Endothelial cell of umbilical vein (primary cell): ENCODE measurements at regions of chr12 and their contacts with region 1.

Region 1: GRCh38 chr12:94149119-94149780 is 873 bp downstream of the PLXNC1 start:
- DNase-seq: no peak
- H3K4me3 ChIP-seq: peak overlapping the region in 1 of 3 experiments; percentile 11
- H3K27ac ChIP-seq: no peak overlapping the region
- H3K4me1 ChIP-seq: no peaks in the 10 kb centered on the region
- H3K27me3 ChIP-seq: peaks cover 62 to 82% of the 10 kb centered on the region in 2 experiments
- CTCF ChIP-seq: peak in 1 of 2 donors; percentile 10
- POLR2A ChIP-seq: no peak

Region 2: DNA sequence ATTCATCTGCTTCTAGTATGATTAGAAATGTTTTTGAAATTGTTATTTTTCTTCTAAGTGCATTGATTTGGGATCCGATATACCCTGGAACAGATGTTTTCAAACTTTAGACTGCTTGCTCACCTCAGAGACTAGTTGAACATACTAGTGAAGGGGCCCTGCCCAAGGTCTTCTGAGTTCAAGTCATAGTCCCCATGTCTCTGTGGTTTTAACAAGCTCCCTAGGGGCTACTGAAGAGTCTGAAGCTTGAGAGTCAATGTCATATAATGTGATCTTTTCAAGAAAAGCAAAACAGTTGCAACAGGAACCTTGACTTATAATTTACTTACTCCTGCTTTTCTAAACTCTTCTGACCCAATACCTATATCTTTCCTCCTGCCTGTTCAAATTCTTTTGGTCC is 700.0 kb before region 1 on chr12:
- CTCF ChIA-PET with region 1: no interaction called
- POLR2A ChIA-PET with region 1: no interaction called
- dilution Hi-C with region 1: no loop called
- intact Hi-C with region 1: no loop called
- DNase-seq: no peak
- H3K4me3 ChIP-seq: no peak overlapping the region
- H3K27ac ChIP-seq: no peak overlapping the region
- H3K4me1 ChIP-seq: no peaks in the 10 kb centered on the region
- H3K27me3 ChIP-seq: peaks cover 3 to 4% of the 10 kb centered on the region in 2 experiments
- CTCF ChIP-seq: no peak
- POLR2A ChIP-seq: no peak

Region 3: GRCh38 chr12:94112132-94112531 is 37.1 kb before region 1 on chr12:
- CTCF ChIA-PET with region 1: no interaction called
- POLR2A ChIA-PET with region 1: no interaction called
- dilution Hi-C with region 1: no loop called
- intact Hi-C with region 1: no loop called
- DNase-seq: no peak
- H3K4me3 ChIP-seq: no peak overlapping the region
- H3K27ac ChIP-seq: no peak overlapping the region
- H3K4me1 ChIP-seq: no peaks in the 10 kb centered on the region
- H3K27me3 ChIP-seq: peaks cover 13 to 23% of the 10 kb centered on the region in 2 experiments
- CTCF ChIP-seq: no peak
- POLR2A ChIP-seq: no peak

Region 4: DNA sequence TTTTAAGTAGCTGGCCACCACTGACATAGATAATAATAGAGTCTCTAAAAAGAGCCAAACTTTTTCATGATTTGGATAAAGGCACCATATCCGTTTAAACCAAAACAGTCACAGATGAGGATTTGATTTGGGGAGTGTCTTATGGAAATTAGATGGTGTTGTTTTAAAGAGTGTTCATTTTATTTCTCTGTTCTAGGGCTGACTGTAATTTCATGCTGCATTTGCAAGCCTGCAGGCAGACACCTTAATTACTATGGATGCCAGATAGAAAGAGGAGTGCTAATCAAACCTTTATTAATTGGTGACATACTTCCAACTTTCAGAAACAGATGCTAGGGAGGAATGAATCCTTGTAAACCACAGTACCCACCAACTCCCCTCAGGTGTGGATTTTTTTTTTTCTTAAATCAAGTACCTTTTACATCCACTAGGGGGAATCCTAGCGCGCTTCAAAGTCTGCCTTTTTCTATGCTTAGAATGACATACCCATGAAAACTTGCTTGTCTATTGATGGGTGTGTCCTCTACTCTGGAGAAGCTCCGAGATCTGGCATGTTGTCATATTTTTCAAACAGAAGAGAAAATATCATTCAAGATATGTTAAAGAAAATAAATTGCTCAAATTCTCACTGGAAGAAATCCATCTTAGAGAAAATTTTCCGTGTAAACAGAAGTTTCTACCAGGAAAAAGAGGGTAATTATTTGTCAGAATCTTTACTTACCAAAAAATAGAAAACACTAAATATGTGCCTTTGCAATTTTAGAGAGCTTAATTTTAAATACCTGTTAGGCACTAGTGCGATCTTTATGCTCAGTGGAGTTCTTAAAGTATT is 15.1 kb before region 1 on chr12:
- CTCF ChIA-PET with region 1: interaction called, 12 read pairs
- POLR2A ChIA-PET with region 1: no interaction called
- dilution Hi-C with region 1: no loop called
- intact Hi-C with region 1: no loop called
- DNase-seq: peak; percentile 56
- H3K4me3 ChIP-seq: no peak overlapping the region
- H3K27ac ChIP-seq: no peak overlapping the region
- H3K4me1 ChIP-seq: no peaks in the 10 kb centered on the region
- H3K27me3 ChIP-seq: peaks cover 8 to 9% of the 10 kb centered on the region in 2 experiments
- CTCF ChIP-seq: peak; percentile 40 to 58
- POLR2A ChIP-seq: no peak

Region 5: DNA sequence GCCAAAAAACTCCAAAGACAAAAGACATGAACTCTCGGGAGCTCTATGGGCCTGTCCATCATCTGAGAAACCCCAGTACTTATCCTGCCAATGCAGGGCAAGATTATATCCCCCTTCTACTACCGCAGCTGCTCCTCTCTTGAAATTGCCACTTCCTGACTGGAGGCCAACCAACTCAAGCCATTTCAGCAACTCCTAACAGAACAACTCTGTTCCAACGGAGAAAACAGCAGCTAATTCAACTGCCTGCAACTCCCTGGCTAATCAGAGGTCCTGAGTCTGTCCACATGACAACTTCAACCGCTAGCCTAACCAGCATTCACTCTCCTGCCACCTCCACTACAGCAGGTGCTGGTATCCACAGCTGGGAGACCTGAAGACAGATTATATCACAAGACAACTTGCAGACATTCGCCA is 286.3 kb after region 1 on chr12:
- CTCF ChIA-PET with region 1: interaction called, 3 read pairs
- POLR2A ChIA-PET with region 1: no interaction called
- dilution Hi-C with region 1: no loop called
- intact Hi-C with region 1: loop called (anchors 5 kb)
- DNase-seq: no peak
- H3K4me3 ChIP-seq: no peak overlapping the region
- H3K27ac ChIP-seq: no peak overlapping the region
- H3K4me1 ChIP-seq: no peaks in the 10 kb centered on the region
- H3K27me3 ChIP-seq: no peaks in the 10 kb centered on the region
- CTCF ChIP-seq: no peak
- POLR2A ChIP-seq: no peak

Region 6: GRCh38 chr12:94532490-94533422 is 383.5 kb after region 1 on chr12:
- CTCF ChIA-PET with region 1: interaction called, 9 read pairs
- POLR2A ChIA-PET with region 1: no interaction called
- dilution Hi-C with region 1: no loop called
- intact Hi-C with region 1: loop called (anchors 5 kb)
- DNase-seq: peak; percentile 64
- H3K4me3 ChIP-seq: no peak overlapping the region
- H3K27ac ChIP-seq: no peak overlapping the region
- H3K4me1 ChIP-seq: no peaks in the 10 kb centered on the region
- H3K27me3 ChIP-seq: no peaks in the 10 kb centered on the region
- CTCF ChIP-seq: peak; percentile 76 to 79
- POLR2A ChIP-seq: no peak